ENCODE measurements at regions of chr9 and their contacts with region 1.

Region 1: GRCh38 chr9:22469928-22470544 is 23.4 kb downstream of the DMRTA1 start:
- H3K4me3 ChIP-seq: no peak overlapping the region
- H3K27ac ChIP-seq: no peak overlapping the region
- H3K4me1 ChIP-seq: no peaks in the 10 kb centered on the region
- CTCF ChIP-seq: no peak

Region 2: GRCh38 chr9:22237497-22238363 is 232.3 kb before region 1 on chr9:
- CTCF ChIA-PET with region 1: no interaction called
- POLR2A ChIA-PET with region 1: no interaction called
- H3K4me3 ChIP-seq: peak overlapping the region; percentile 20
- H3K27ac ChIP-seq: peak overlapping the region; percentile 81
- H3K4me1 ChIP-seq: peaks cover 22% of the 10 kb centered on the region
- CTCF ChIP-seq: no peak

Region 3: GRCh38 chr9:22307013-22307711 is 162.9 kb before region 1 on chr9:
- CTCF ChIA-PET with region 1: interaction called, 17 read pairs
- POLR2A ChIA-PET with region 1: no interaction called
- H3K4me3 ChIP-seq: no peak overlapping the region
- H3K27ac ChIP-seq: no peak overlapping the region
- H3K4me1 ChIP-seq: no peaks in the 10 kb centered on the region
- CTCF ChIP-seq: peak; percentile 42; the same call in 1 of the 2 replicates

Region 4: GRCh38 chr9:22481566-22481965 is 11.5 kb after region 1 on chr9:
- CTCF ChIA-PET with region 1: interaction called, 13 read pairs
- POLR2A ChIA-PET with region 1: no interaction called
- H3K4me3 ChIP-seq: no peak overlapping the region
- H3K27ac ChIP-seq: no peak overlapping the region
- H3K4me1 ChIP-seq: no peaks in the 10 kb centered on the region
- CTCF ChIP-seq: no peak

Region 5: DNA sequence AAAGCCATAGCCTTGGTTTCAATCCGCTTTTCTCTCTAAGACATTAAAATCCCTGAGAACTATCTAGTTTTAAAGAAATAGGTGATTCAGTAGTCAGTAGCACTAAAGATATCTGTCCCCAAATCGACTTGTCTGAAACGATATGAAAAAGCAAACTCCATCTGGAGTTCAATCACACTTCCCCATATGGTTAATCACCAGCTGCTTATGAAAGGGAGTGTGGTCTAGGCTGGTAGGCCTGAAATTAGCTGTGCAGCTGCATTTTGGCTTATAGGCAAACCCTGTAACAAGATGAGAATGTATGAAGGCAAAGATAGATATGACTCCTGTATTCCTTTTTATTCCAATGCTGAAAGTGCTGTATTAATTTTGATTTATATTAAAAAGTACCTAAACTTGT is 42.5 kb after region 1 on chr9:
- CTCF ChIA-PET with region 1: no interaction called
- POLR2A ChIA-PET with region 1: no interaction called
- H3K4me3 ChIP-seq: no peak overlapping the region
- H3K27ac ChIP-seq: no peak overlapping the region
- H3K4me1 ChIP-seq: no peaks in the 10 kb centered on the region
- CTCF ChIP-seq: no peak

Region 6: GRCh38 chr9:22731786-22732185 is 261.8 kb after region 1 on chr9:
- CTCF ChIA-PET with region 1: no interaction called
- POLR2A ChIA-PET with region 1: no interaction called
- H3K4me3 ChIP-seq: no peak overlapping the region
- H3K27ac ChIP-seq: no peak overlapping the region
- H3K4me1 ChIP-seq: no peaks in the 10 kb centered on the region
- CTCF ChIP-seq: no peak

Region 7: GRCh38 chr9:22913518-22913917 is 443.5 kb after region 1 on chr9:
- CTCF ChIA-PET with region 1: no interaction called
- POLR2A ChIA-PET with region 1: no interaction called
- H3K4me3 ChIP-seq: no peak overlapping the region
- H3K27ac ChIP-seq: no peak overlapping the region
- H3K4me1 ChIP-seq: no peaks in the 10 kb centered on the region
- CTCF ChIP-seq: no peak